GM10248 (cell line): ENCODE measurements at regions of chr7 and their contacts with region 1.

Region 1: GRCh38 chr7:38870147-38870546 is 38.8 kb downstream of the VPS41 start:
- DNase-seq: no peak
- CTCF ChIP-seq: no peak

Region 2: GRCh38 chr7:38858259-38859165 is 11.6 kb before region 1 on chr7:
- CTCF ChIA-PET with region 1: interaction called, 16 read pairs
- POLR2A ChIA-PET with region 1: no interaction called
- DNase-seq: no peak
- CTCF ChIP-seq: no peak

Region 3: DNA sequence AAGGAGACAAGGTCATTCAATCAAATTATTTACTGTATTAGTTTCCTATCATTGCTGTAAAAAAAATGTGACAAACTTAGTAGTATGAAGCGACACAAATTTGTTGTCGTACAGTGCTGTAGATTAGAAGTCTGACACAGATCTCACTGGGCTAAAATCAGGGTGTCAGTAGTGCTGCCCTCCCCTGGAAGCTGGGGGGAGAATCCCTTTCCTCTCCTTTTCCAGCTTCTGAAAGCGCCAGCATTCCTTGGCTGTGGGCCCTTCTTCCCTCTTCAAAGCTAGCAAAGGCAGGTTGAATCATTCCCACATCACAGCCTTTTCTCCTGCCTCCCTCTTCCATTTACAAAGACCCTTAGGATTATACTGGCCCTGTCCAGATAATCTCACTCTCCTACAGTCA is 10.9 kb after region 1 on chr7:
- CTCF ChIA-PET with region 1: interaction called, 28 read pairs
- POLR2A ChIA-PET with region 1: no interaction called
- DNase-seq: no peak
- CTCF ChIP-seq: no peak